A673 (cell line): ENCODE measurements at regions of chr1 and their contacts with region 1.

Region 1: GRCh38 chr1:192003295-192004077 is 154.8 kb upstream of the RGS18 start:
- DNase-seq: no peak
- H3K4me3 ChIP-seq: no peak overlapping the region
- H3K27ac ChIP-seq: no peak overlapping the region
- H3K4me1 ChIP-seq: peaks cover 17% of the 10 kb centered on the region
- H3K27me3 ChIP-seq: no peaks in the 10 kb centered on the region
- CTCF ChIP-seq: no peak

Region 2: GRCh38 chr1:190633488-190633887 is 1370.0 kb before region 1 on chr1:
- CTCF ChIA-PET with region 1: no interaction called
- POLR2A ChIA-PET with region 1: no interaction called
- intact Hi-C with region 1: loop called (anchors 5 kb)
- DNase-seq: peak; percentile 63
- H3K4me3 ChIP-seq: no peak overlapping the region
- H3K27ac ChIP-seq: no peak overlapping the region
- H3K4me1 ChIP-seq: no peaks in the 10 kb centered on the region
- H3K27me3 ChIP-seq: no peaks in the 10 kb centered on the region
- CTCF ChIP-seq: peak; percentile 51

Region 3: GRCh38 chr1:192133350-192133926 is 130.0 kb after region 1 on chr1:
- CTCF ChIA-PET with region 1: no interaction called
- POLR2A ChIA-PET with region 1: interaction called, 6 read pairs
- intact Hi-C with region 1: loop called (anchors 2 kb)
- DNase-seq: no peak
- H3K4me3 ChIP-seq: no peak overlapping the region
- H3K27ac ChIP-seq: peak overlapping the region; percentile 62
- H3K4me1 ChIP-seq: peaks cover 22% of the 10 kb centered on the region
- H3K27me3 ChIP-seq: no peaks in the 10 kb centered on the region
- CTCF ChIP-seq: no peak

Region 4: DNA sequence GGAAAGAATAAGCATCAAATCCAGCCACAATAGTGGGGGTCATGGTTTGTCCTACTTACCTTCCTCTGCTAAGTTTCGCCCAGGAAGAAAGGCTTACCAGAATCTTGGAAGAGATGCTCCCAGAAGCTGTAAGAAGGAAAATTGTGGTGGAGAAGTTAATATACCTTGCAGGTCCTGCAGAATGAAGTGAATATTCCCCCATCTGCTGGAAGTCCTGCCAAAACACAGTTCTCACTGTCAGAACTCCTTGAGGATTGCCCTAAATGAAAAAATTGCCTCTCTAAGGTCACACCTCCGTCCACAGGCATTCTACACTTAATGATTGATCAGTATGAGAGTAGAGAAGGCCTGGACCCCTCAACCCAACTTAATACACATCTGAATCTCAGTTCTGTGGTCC is 234.9 kb after region 1 on chr1:
- CTCF ChIA-PET with region 1: no interaction called
- POLR2A ChIA-PET with region 1: no interaction called
- intact Hi-C with region 1: no loop called
- DNase-seq: peak; percentile 51
- H3K4me3 ChIP-seq: no peak overlapping the region
- H3K27ac ChIP-seq: no peak overlapping the region
- H3K4me1 ChIP-seq: peaks cover 48% of the 10 kb centered on the region
- H3K27me3 ChIP-seq: no peaks in the 10 kb centered on the region
- CTCF ChIP-seq: peak; percentile 42; the same call in 1 of the 2 replicates

Region 5: GRCh38 chr1:192311281-192311680 is 307.8 kb after region 1 on chr1:
- CTCF ChIA-PET with region 1: interaction called, 11 read pairs
- POLR2A ChIA-PET with region 1: no interaction called
- intact Hi-C with region 1: loop called (anchors 1 kb)
- DNase-seq: peak; percentile 86
- H3K4me3 ChIP-seq: no peak overlapping the region
- H3K27ac ChIP-seq: peak overlapping the region; percentile 62
- H3K4me1 ChIP-seq: peaks cover 44% of the 10 kb centered on the region
- H3K27me3 ChIP-seq: no peaks in the 10 kb centered on the region
- CTCF ChIP-seq: peak; percentile 81

Region 6: DNA sequence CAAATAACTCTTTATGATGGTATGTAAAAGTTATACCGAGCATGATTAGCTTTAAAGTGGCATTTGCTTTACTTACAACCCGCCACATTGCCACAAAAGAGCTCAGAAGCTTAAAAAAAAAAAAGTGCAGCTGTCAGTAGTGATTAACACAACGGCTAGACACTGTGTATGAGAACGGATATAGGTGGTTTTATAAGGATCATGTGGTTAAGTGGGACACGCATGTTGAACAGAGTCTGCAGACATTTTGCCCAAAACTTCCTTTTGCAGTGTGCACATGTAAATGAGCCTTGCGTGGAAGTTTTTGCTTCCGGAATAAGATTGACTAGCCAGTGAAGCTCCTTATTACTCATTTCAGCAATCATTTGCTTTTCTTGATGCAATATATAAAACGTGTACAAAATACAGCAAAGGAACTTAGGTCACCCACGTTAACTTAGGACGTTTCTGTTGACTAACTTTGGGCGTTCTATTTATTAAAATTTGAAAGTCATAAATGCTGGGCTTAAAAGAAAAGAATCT is 513.4 kb after region 1 on chr1:
- CTCF ChIA-PET with region 1: no interaction called
- POLR2A ChIA-PET with region 1: interaction called, 3 read pairs
- intact Hi-C with region 1: loop called (anchors 1 kb)
- DNase-seq: peak; percentile 96
- H3K4me3 ChIP-seq: no peak overlapping the region
- H3K27ac ChIP-seq: peak overlapping the region; percentile 96
- H3K4me1 ChIP-seq: peaks cover 64% of the 10 kb centered on the region
- H3K27me3 ChIP-seq: no peaks in the 10 kb centered on the region
- CTCF ChIP-seq: no peak